ENCODE measurements at regions of chr17 and their contacts with region 1.

Region 1: DNA sequence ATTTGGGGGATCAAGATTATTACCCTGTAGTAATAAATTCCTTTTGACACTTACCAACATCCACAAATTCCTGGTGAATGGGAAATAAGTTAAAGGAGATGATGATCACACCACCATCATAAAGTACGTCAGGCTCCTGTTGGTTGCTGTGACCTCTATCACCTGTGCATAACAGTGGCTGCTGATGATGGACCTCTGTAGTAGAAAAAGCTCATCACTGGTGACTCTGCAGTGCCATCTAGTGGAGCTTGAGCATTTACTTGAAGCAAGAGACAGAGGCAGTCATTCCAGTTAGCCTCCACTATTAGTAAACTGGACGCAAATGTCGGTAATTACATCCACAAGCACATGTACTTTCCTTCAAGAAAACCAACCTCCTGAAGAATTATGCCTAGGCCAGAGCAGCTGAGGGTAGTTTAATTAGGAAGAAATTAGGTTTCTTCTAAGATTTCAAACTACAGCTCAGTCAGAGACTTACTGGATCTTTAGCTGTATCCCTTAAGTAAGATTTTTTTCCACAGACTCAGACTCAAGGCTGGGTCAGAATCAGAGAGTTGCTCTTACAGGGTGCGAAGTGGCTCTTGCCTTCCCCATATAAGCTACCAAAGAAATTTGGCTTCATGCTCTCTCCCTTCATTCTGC is 39.3 kb downstream of the CYB561 start:
- DNase-seq: peak in 1 of 2 donors; percentile 87
- H3K4me3 ChIP-seq: no peak overlapping the region
- H3K27ac ChIP-seq: peak overlapping the region; percentile 55 to 69
- H3K4me1 ChIP-seq: peaks cover 2 to 3% of the 10 kb centered on the region in 2 donors
- H3K27me3 ChIP-seq: no peaks in the 10 kb centered on the region
- CTCF ChIP-seq: peak; percentile 75 to 86 (median 78)

Region 2: GRCh38 chr17:63082273-63082993 is 324.4 kb before region 1 on chr17:
- intact Hi-C with region 1: loop called (anchors 1 kb)
- DNase-seq: no peak
- H3K4me3 ChIP-seq: no peak overlapping the region
- H3K27ac ChIP-seq: no peak overlapping the region
- H3K4me1 ChIP-seq: no peaks in the 10 kb centered on the region
- H3K27me3 ChIP-seq: no peaks in the 10 kb centered on the region
- CTCF ChIP-seq: peak in 2 of 3 experiments; percentile 20 to 41